Activated CD4-positive, alpha-beta memory T cell treated with anti-CD3 and anti-CD28 coated beads for 36 hours (primary cell): ENCODE measurements at regions of chr1 and their contacts with region 1.

Region 1: GRCh38 chr1:151945725-151946364 is 36.5 kb upstream of the THEM4 start:
- DNase-seq: peak; percentile 88
- H3K4me3 Mint-ChIP-seq: peak overlapping the region; percentile 60
- H3K27ac Mint-ChIP-seq: peak overlapping the region; percentile 87
- H3K4me1 Mint-ChIP-seq: peaks cover 54% of the 10 kb centered on the region
- H3K27me3 Mint-ChIP-seq: no peaks in the 10 kb centered on the region

Region 2: DNA sequence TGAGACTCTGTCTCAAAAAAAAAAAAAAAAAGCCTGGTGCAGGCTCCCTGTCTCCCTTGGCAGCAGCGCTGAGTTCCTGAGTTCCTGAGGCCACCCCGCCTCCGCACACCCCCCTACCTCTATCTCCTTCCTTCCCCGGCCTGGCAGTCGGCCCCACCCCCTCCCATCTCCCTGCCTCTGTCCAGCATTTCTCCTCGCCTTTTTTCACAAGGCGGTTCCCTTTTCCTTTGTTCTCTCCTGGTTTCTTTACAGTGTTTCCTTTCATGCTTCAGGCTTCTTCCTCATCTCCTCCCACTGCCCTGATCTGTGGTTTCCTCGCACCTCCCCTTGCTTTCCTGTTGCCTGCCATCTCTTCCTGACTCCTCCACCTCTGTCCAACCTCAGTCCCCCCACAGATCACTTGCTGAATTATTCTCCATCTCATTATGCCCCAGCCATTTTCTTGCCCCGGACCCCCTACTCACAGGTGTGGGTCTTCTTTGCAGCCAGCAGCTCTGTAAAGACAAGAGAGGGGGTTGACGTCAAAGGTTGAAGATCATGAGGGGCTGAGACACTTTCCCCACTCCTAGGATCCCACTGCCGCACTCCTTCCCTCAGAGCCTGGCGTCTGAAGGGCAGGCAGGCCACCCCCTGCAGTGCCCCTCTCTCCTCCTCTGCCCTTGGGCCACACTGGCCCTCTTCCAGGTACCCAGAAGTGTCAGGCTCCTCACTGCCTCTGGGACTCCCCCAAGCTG is 116.7 kb before region 1 on chr1:
- CTCF ChIA-PET with region 1: no interaction called
- POLR2A ChIA-PET with region 1: no interaction called
- intact Hi-C with region 1: loop called (anchors 5 kb)
- DNase-seq: no peak
- H3K4me3 Mint-ChIP-seq: peak overlapping the region; percentile 22
- H3K27ac Mint-ChIP-seq: peak overlapping the region; percentile 86
- H3K4me1 Mint-ChIP-seq: peaks cover 69% of the 10 kb centered on the region
- H3K27me3 Mint-ChIP-seq: no peaks in the 10 kb centered on the region

Region 3: GRCh38 chr1:151867785-151868411 is 77.9 kb before region 1 on chr1:
- CTCF ChIA-PET with region 1: no interaction called
- POLR2A ChIA-PET with region 1: no interaction called
- intact Hi-C with region 1: no loop called
- DNase-seq: peak; percentile 30
- H3K4me3 Mint-ChIP-seq: no peak overlapping the region
- H3K27ac Mint-ChIP-seq: peak overlapping the region; percentile 54
- H3K4me1 Mint-ChIP-seq: peaks cover 8% of the 10 kb centered on the region
- H3K27me3 Mint-ChIP-seq: no peaks in the 10 kb centered on the region

Region 4: GRCh38 chr1:151984313-151984956 is 38.6 kb after region 1 on chr1:
- CTCF ChIA-PET with region 1: interaction called, 377 read pairs
- POLR2A ChIA-PET with region 1: interaction called, 13 read pairs
- intact Hi-C with region 1: loop called (anchors 1 kb)
- DNase-seq: peak; percentile 74
- H3K4me3 Mint-ChIP-seq: peak overlapping the region; percentile 24
- H3K27ac Mint-ChIP-seq: peak overlapping the region; percentile 85
- H3K4me1 Mint-ChIP-seq: peaks cover 67% of the 10 kb centered on the region
- H3K27me3 Mint-ChIP-seq: no peaks in the 10 kb centered on the region

Region 5: GRCh38 chr1:152034646-152035405 is 89.0 kb after region 1 on chr1:
- CTCF ChIA-PET with region 1: interaction called, 3 read pairs
- POLR2A ChIA-PET with region 1: interaction called, 8 read pairs
- intact Hi-C with region 1: loop called (anchors 1 kb)
- DNase-seq: peak; percentile 83
- H3K4me3 Mint-ChIP-seq: peak overlapping the region; percentile 83
- H3K27ac Mint-ChIP-seq: peak overlapping the region; percentile 100
- H3K4me1 Mint-ChIP-seq: peaks cover 43% of the 10 kb centered on the region
- H3K27me3 Mint-ChIP-seq: no peaks in the 10 kb centered on the region